ENCODE measurements at regions of chr11 and their contacts with region 1.

Region 1: GRCh38 chr11:103108933-103109817 is at the start of gene DYNC2H1:
- DNase-seq: peak; percentile 90
- H3K4me3 ChIP-seq: peak within 1 kb of the TSS; percentile 74 to 75
- H3K27ac ChIP-seq: peak within 1 kb of the TSS; percentile 74 to 87
- H3K4me1 ChIP-seq: peaks cover 0 to 7% of the 10 kb centered on the region in 2 experiments; a peak in 2 of 4 replicates
- H3K27me3 ChIP-seq: no peaks in the 10 kb centered on the region
- CTCF ChIP-seq: peak; percentile 60
- EP300 ChIP-seq: no peak
- RAD21 ChIP-seq: 0 out of 2 replicates have a peak, but pooled peaks have one; percentile 2
- polyA plus RNA-seq, gene DYNC2H1: 15.3 and 16.5 TPM in 2 replicates

Region 2: DNA sequence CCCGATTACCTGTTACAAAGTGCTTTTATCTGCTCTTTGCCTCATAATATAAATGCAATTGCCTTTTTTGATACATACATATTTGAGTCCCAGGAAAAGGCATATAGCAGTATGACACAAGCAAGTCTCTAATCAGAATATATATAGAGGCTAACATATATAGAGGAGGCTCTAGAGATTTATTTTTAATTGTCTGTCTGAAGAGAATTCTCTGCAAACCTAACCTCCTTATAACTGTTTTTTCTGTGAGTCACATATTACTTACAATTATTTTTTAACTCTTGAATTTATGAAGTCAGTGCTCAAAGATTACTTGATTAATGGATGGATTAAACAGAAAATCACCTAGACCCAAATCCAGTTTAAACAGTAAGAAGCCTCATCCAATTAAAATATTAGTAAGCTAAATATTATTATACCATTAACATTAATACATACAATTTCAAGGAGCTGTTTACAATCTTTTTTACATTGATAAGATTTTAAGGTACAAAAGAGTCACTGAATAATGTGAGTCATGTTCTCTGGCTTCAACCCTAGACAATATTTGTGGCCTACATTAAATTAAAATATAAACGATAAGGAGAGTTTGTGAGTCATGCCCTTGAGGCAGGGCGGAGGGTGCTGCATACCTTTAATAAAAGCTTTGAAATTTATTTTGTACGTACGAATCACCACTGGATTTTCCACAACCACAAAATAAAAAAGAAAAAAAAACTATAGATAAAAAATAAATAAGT is 134.5 kb before region 1 on chr11:
- CTCF ChIA-PET with region 1: no interaction called
- POLR2A ChIA-PET with region 1: no interaction called
- DNase-seq: no peak
- H3K4me3 ChIP-seq: no peak overlapping the region
- H3K27ac ChIP-seq: peak overlapping the region; percentile 55 to 69; a peak in 3 of 4 replicates
- H3K4me1 ChIP-seq: peaks cover 4 to 9% of the 10 kb centered on the region in 2 experiments
- H3K27me3 ChIP-seq: no peaks in the 10 kb centered on the region
- CTCF ChIP-seq: no peak
- EP300 ChIP-seq: peak in 1 of 2 experiments; percentile 73; a peak in 1 of 4 replicates
- RAD21 ChIP-seq: no peak

Region 3: DNA sequence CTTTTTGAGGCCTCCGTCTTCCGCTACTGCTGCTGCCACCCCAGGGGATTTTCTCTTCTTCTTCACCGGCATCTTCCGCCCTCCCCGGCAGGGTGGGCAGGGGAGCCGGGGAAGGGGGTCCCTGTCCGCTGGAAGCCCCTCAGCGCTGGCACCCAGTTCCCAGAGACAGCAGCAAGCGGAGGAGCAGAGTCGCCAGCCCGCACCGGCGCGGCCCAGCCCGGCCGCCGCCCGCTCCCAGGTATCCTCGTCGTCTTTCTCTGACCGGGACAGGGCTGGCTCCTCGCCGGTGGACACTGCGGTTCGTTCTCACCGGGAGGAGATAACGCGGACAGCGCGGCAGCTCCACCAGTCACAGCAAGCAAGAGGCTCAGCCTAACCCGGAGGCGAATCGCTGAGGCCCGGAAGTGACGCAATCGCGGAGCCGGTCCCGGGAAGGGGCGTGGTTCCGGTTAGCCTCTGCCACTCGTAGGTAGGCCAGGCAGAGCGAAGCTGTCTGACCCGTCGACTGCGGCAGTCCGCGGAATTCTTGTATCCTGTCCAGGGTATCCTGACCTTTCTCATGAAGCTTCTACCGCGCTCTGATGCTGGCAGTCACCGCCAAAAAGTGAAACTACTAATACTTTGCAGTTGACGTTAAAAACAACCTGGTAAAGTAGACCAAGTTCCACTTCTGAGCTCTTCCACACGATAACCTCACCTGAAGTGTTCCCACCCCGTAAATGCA is 17.2 kb before region 1 on chr11 and contains the start of gene DCUN1D5:
- CTCF ChIA-PET with region 1: interaction called, 27 read pairs
- POLR2A ChIA-PET with region 1: interaction called, 20 read pairs
- DNase-seq: peak; percentile 96
- H3K4me3 ChIP-seq: peak within 1 kb of the TSS; percentile 80 to 98
- H3K27ac ChIP-seq: peak within 1 kb of the TSS; percentile 86 to 93
- H3K4me1 ChIP-seq: peaks cover 0 to 16% of the 10 kb centered on the region in 2 experiments; a peak in 3 of 4 replicates
- H3K27me3 ChIP-seq: no peaks in the 10 kb centered on the region; the same call in 1 of the 2 replicates
- CTCF ChIP-seq: no peak
- EP300 ChIP-seq: no peak
- RAD21 ChIP-seq: no peak
- polyA plus RNA-seq, gene DCUN1D5: 33.1 and 40.3 TPM in 2 replicates

Region 4: GRCh38 chr11:103097279-103097678 is 11.9 kb before region 1 on chr11:
- CTCF ChIA-PET with region 1: interaction called, 27 read pairs
- POLR2A ChIA-PET with region 1: interaction called, 20 read pairs
- DNase-seq: no peak
- H3K4me3 ChIP-seq: no peak overlapping the region
- H3K27ac ChIP-seq: no peak overlapping the region
- H3K4me1 ChIP-seq: peaks cover 0 to 9% of the 10 kb centered on the region in 2 experiments; a peak in 2 of 4 replicates
- H3K27me3 ChIP-seq: no peaks in the 10 kb centered on the region; the same call in 1 of the 2 replicates
- CTCF ChIP-seq: no peak
- EP300 ChIP-seq: no peak
- RAD21 ChIP-seq: no peak

Region 5: DNA sequence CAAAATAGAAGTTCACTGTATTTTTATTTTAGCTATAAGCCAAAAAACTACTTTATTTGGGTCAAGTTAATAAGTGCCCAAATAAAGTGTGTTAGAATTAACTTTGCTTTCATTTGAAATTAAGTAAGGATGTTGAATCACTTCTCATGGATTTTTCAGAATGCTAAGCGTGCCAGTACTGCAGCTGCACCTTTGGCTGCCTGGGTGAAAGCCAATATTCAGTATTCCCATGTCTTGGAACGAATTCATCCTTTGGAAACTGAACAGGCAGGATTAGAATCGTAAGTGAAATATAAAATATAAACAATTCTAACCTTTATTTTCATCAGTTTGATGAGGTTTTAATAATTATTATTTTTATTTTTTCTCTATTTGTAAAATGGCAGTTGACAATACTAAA is 113.6 kb after region 1 on chr11:
- CTCF ChIA-PET with region 1: no interaction called
- POLR2A ChIA-PET with region 1: no interaction called
- DNase-seq: no peak
- H3K4me3 ChIP-seq: no peak overlapping the region
- H3K27ac ChIP-seq: no peak overlapping the region; a peak in 1 of 4 replicates
- H3K4me1 ChIP-seq: peaks cover 0 to 2% of the 10 kb centered on the region in 2 experiments; a peak in 2 of 4 replicates
- H3K27me3 ChIP-seq: no peaks in the 10 kb centered on the region
- CTCF ChIP-seq: no peak
- EP300 ChIP-seq: no peak
- RAD21 ChIP-seq: no peak